ENCODE measurements at regions of chr2 and their contacts with region 1.

Region 1: DNA sequence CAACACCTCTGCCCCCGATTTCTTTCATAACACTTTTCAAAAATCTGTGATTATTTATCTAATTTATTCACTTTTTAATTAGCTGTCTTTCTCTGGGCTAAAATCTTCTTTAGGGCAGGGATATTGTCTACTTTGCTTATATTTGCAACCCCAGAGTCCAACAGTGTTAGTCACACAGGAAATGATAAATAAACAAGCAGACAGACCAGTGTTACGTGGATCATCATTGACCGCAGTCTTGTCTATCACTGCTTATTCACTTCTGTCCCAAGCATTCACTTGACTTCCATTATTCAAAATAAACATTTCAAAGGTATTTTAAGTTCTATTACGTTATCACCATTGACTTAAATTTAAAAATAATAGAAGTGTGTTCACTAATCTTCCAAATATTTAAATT is 237.6 kb upstream of the UBE2E3 start:
- DNase-seq: no peak
- ATAC-seq: no peak
- H3K4me3 ChIP-seq: no peak overlapping the region
- H3K27ac ChIP-seq: no peak overlapping the region
- H3K4me1 ChIP-seq: no peaks in the 10 kb centered on the region
- H3K27me3 ChIP-seq: no peaks in the 10 kb centered on the region
- CTCF ChIP-seq: no peak

Region 2: GRCh38 chr2:180231015-180231414 is 511.8 kb before region 1 on chr2:
- intact Hi-C with region 1: no loop called
- DNase-seq: no peak
- ATAC-seq: no peak
- H3K4me3 ChIP-seq: no peak overlapping the region
- H3K27ac ChIP-seq: no peak overlapping the region
- H3K4me1 ChIP-seq: no peaks in the 10 kb centered on the region
- H3K27me3 ChIP-seq: no peaks in the 10 kb centered on the region
- CTCF ChIP-seq: no peak

Region 3: GRCh38 chr2:180644709-180645108 is 98.1 kb before region 1 on chr2:
- intact Hi-C with region 1: loop called in 1 of 10 experiments (anchors 10 kb)
- DNase-seq: no peak
- ATAC-seq: no peak
- H3K4me3 ChIP-seq: no peak overlapping the region
- H3K27ac ChIP-seq: no peak overlapping the region
- H3K4me1 ChIP-seq: no peaks in the 10 kb centered on the region
- H3K27me3 ChIP-seq: no peaks in the 10 kb centered on the region
- CTCF ChIP-seq: no peak

Region 4: GRCh38 chr2:180799141-180799540 is 56.3 kb after region 1 on chr2:
- intact Hi-C with region 1: no loop called
- DNase-seq: no peak
- ATAC-seq: no peak
- H3K4me3 ChIP-seq: no peak overlapping the region
- H3K27ac ChIP-seq: no peak overlapping the region
- H3K4me1 ChIP-seq: no peaks in the 10 kb centered on the region
- H3K27me3 ChIP-seq: no peaks in the 10 kb centered on the region
- CTCF ChIP-seq: no peak

Region 5: DNA sequence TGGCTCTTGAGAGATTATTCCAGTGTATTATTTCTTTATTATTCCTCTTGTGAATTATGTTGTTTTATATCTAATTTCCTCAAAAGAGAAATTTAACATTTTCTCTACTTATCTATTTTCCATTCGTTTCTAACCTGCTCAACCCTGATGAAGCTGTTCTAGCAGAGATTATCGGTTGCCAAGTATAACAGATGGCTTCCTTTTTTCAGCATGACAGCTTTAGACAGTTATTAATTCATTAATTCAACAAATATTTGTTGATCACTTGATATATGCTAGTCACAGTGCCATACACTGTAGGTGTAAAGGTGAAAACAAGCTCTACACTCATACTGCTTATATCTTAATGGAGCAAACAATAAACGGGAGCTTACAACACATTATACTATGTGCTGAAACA is 99.7 kb after region 1 on chr2:
- intact Hi-C with region 1: no loop called
- DNase-seq: no peak
- ATAC-seq: no peak
- H3K4me3 ChIP-seq: no peak overlapping the region
- H3K27ac ChIP-seq: no peak overlapping the region
- H3K4me1 ChIP-seq: no peaks in the 10 kb centered on the region
- H3K27me3 ChIP-seq: peaks cover 0 to 10% (median 0%) of the 10 kb centered on the region in 7 donors
- CTCF ChIP-seq: no peak